ENCODE measurements at regions of chr10 and their contacts with region 1.

Region 1: GRCh38 chr10:89793649-89794254 is 92.4 kb downstream of the KIF20B start:
- DNase-seq: no peak
- ATAC-seq: peak; percentile 89 to 91 (median 90)
- H3K4me3 ChIP-seq: no peak overlapping the region
- H3K27ac ChIP-seq: no peak overlapping the region
- H3K4me1 ChIP-seq: no peaks in the 10 kb centered on the region
- H3K27me3 ChIP-seq: no peaks in the 10 kb centered on the region
- CTCF ChIP-seq: peak; percentile 72 to 84 (median 82)
- POLR2A ChIP-seq: no peak

Region 2: DNA sequence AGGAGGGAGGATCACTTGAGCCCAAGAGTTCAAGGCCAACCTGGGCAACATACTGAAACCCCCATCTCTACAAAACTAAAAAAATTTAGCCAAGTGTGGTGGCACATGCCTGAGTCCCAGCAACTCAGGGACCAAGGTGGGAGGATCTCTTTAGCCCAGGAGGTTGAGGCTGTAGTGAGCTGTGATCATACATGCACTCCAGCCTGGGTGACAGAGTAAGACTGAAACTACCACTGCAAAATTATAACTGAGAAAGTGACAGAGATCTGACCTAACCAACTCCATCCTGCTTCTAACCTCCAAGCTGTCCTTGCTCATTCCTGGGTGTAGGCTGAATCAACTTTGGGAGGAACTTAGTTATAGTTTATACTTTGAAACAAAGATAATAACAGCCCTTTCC is 1004.7 kb after region 1 on chr10:
- intact Hi-C with region 1: loop called in 1 of 2 experiments (anchors 10 kb)
- DNase-seq: no peak
- ATAC-seq: no peak
- H3K4me3 ChIP-seq: no peak overlapping the region
- H3K27ac ChIP-seq: no peak overlapping the region
- H3K4me1 ChIP-seq: no peaks in the 10 kb centered on the region
- H3K27me3 ChIP-seq: no peaks in the 10 kb centered on the region
- CTCF ChIP-seq: no peak
- POLR2A ChIP-seq: no peak